Activated CD4-positive, alpha-beta memory T cell treated with anti-CD3 and anti-CD28 coated beads for 36 hours (primary cell): ENCODE measurements at regions of chr5 and their contacts with region 1.

Region 1: GRCh38 chr5:131776450-131776849 is 20.4 kb downstream of the FNIP1 start:
- DNase-seq: no peak
- H3K4me3 Mint-ChIP-seq: no peak overlapping the region
- H3K27ac Mint-ChIP-seq: no peak overlapping the region
- H3K4me1 Mint-ChIP-seq: peaks cover 16% of the 10 kb centered on the region
- H3K27me3 Mint-ChIP-seq: no peaks in the 10 kb centered on the region

Region 2: GRCh38 chr5:131810510-131811249 is 34.2 kb after region 1 on chr5:
- CTCF ChIA-PET with region 1: interaction called, 3 read pairs
- POLR2A ChIA-PET with region 1: no interaction called
- intact Hi-C with region 1: loop called (anchors 2 kb)
- DNase-seq: no peak
- H3K4me3 Mint-ChIP-seq: no peak overlapping the region
- H3K27ac Mint-ChIP-seq: no peak overlapping the region
- H3K4me1 Mint-ChIP-seq: no peaks in the 10 kb centered on the region
- H3K27me3 Mint-ChIP-seq: no peaks in the 10 kb centered on the region